ENCODE measurements at regions of chr9 and their contacts with region 1.

Region 1: DNA sequence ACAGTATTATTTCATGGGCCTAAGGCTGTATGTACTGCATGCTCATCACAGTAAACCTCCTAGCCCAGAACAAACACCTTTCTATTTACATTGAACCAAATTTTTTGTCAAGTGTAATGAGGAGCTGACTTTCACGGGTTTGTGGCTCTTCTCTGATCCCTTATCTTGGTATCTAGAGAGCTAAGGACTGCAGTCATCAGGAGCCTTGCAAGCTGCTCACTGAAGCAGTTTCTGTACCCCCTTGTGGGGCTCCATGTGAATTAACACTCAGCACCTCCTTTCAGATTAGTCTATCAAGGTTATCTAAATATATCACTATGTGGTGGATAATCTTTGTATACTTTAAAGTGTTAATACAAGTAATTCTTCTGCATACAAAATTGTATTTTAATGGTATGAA is 108.2 kb downstream of the AUH start:
- DNase-seq: peak; percentile 72
- H3K4me3 Mint-ChIP-seq: no peak overlapping the region
- H3K27ac Mint-ChIP-seq: peak overlapping the region; percentile 19
- H3K4me1 Mint-ChIP-seq: peaks cover 33% of the 10 kb centered on the region
- H3K27me3 Mint-ChIP-seq: no peaks in the 10 kb centered on the region

Region 2: DNA sequence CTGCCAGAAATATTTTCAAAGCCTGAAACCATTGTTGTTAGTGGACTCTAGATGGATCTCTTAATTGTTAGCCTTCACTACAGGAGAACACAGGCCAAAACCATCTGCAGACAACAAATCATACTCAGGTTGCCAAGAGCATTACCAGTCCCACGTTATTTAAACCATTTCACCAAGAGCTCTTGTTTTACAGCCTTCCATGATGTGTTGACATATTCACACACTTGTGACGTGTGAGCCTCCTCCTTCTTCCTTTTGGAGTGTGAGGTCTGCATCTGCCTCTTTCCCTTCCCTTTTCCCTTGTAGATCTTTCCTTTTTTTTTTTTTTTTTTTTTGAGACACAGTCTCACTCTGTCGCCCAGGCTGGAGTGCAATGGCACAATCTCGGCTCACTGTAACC is 170.8 kb before region 1 on chr9:
- CTCF ChIA-PET with region 1: no interaction called
- POLR2A ChIA-PET with region 1: no interaction called
- DNase-seq: no peak
- H3K4me3 Mint-ChIP-seq: no peak overlapping the region
- H3K27ac Mint-ChIP-seq: no peak overlapping the region
- H3K4me1 Mint-ChIP-seq: peaks cover 11% of the 10 kb centered on the region
- H3K27me3 Mint-ChIP-seq: no peaks in the 10 kb centered on the region

Region 3: DNA sequence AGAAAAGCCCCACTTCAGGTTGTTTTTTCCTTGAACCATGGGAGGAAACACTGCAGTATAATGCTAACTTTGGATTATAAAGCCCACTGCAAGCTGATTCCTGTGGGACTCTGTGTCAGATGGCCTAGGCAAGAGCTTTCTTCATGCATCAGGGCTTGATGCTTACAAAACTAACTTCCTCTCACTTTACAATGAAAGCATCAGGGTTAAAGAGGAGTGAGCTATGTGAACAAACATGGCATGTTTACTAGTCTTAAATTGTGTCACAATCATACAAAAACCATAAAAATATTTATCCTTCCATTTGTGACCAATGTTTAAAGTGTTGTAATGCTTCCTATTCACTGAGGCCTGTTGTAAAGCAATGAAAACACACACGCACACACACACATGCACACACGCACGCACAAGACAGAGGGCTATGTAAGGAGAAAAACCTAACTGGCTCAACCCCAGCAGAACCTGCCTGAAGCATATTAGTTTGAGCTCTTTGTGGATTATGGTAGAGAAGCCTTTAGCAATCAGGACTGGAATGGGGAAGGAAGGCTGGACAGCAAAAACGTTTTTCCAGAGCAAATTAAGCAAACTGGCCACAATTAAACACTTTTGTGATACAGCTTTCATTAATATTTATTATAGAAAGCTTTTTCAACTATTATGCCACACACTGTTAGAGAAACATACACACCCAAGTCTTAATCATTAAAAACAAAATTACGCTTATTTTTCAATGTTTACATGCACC is 13.9 kb before region 1 on chr9:
- CTCF ChIA-PET with region 1: interaction called, 12 read pairs
- POLR2A ChIA-PET with region 1: no interaction called
- DNase-seq: no peak
- H3K4me3 Mint-ChIP-seq: no peak overlapping the region
- H3K27ac Mint-ChIP-seq: no peak overlapping the region
- H3K4me1 Mint-ChIP-seq: no peaks in the 10 kb centered on the region
- H3K27me3 Mint-ChIP-seq: no peaks in the 10 kb centered on the region

Measured in activated CD4-positive, alpha-beta T cell treated with anti-CD3 and anti-CD28 coated beads, Interleukin-2, amount 10 ng/mL, durations not matched to agents 7 days and 5 days (primary cell).